ENCODE measurements at regions of chr5 and their contacts with region 1.

Region 1: DNA sequence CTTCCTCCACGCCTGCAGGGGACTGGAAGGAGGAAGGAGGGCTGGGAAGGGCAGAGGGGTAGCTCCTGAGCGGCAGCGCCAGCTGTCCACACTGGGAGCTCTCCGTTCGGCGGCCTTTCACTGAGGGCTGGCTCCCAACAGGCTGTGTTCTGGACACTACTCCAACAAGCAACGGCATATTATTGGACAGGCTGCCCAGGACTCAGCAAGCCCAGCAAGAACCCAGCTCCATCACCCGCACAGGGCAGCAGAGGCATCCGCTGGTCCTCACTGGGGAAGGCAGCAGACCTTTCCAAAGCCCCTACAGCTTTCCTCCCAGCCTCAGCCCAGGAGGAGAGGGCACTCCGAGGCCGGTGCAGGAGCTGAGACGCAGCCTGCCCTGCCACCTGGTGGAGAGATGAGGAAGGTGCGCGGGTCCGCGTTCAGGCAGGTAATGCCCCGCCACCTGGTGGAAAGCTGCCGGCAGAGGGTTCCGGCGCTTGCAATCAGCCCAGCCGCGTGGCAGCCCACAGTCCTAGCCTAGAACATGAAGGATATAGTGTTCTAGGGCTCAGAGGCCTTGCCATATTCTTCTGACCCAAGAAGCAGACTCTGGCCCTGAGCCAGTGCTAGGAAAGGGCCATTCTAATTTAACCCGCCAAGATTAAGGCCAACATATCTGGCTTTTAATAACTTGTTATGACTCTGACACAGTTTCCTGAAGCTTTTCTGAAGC is 74.4 kb downstream of the NRG2 start:
- DNase-seq: peak; percentile 88 to 95
- H3K4me3 ChIP-seq: no peak overlapping the region
- H3K4me3 Mint-ChIP-seq: no peak overlapping the region
- H3K27ac Mint-ChIP-seq: no peak overlapping the region
- H3K4me1 ChIP-seq: no peaks in the 10 kb centered on the region
- H3K4me1 Mint-ChIP-seq: no peaks in the 10 kb centered on the region
- H3K27me3 ChIP-seq: no peaks in the 10 kb centered on the region
- H3K27me3 Mint-ChIP-seq: peaks cover 3% of the 10 kb centered on the region
- CTCF ChIP-seq: peak; percentile 99 to 100

Region 2: DNA sequence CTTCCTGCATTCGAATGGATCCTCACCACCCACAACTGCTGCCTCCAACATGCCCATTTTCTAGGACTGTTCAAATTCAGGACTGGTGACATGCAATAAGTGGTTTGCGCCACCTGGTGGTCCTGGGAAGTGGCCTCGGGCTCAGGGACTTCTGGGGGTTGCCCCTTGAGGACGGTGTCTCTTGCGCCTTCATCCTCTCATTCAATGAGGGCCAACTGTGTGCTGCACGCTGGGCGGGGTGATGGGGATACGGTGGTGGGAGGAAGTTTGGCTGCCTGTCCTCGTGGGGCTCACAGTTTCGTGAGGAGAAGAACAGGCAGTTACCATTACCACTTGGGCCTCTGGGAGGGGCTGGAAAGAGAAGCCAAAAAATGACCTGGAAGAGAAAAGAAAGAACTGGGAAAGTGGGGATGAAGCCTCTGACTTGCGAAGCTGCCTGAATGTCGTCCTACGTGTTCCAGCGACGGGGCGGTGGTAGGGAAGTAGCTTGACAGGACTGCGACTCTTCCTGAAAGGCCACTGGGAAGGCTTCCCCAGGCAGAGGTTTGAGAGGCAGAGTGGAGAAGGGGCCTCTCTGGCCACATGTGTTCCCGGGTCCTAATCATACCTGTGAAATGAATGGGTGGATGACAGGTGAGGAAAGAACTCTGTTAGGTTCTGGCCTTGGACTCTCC is 124.1 kb before region 1 on chr5:
- CTCF ChIA-PET with region 1: interaction called, 10 read pairs
- POLR2A ChIA-PET with region 1: no interaction called
- intact Hi-C with region 1: loop called (anchors 1 kb)
- DNase-seq: peak; percentile 84 to 85
- H3K4me3 ChIP-seq: no peak overlapping the region
- H3K4me3 Mint-ChIP-seq: no peak overlapping the region
- H3K27ac Mint-ChIP-seq: no peak overlapping the region
- H3K4me1 ChIP-seq: no peaks in the 10 kb centered on the region
- H3K4me1 Mint-ChIP-seq: no peaks in the 10 kb centered on the region
- H3K27me3 ChIP-seq: 0 out of 2 replicates have a peak, but pooled peaks cover 1% of the 10 kb centered on the region
- H3K27me3 Mint-ChIP-seq: peaks cover 15% of the 10 kb centered on the region
- CTCF ChIP-seq: peak; percentile 67 to 92

Region 3: DNA sequence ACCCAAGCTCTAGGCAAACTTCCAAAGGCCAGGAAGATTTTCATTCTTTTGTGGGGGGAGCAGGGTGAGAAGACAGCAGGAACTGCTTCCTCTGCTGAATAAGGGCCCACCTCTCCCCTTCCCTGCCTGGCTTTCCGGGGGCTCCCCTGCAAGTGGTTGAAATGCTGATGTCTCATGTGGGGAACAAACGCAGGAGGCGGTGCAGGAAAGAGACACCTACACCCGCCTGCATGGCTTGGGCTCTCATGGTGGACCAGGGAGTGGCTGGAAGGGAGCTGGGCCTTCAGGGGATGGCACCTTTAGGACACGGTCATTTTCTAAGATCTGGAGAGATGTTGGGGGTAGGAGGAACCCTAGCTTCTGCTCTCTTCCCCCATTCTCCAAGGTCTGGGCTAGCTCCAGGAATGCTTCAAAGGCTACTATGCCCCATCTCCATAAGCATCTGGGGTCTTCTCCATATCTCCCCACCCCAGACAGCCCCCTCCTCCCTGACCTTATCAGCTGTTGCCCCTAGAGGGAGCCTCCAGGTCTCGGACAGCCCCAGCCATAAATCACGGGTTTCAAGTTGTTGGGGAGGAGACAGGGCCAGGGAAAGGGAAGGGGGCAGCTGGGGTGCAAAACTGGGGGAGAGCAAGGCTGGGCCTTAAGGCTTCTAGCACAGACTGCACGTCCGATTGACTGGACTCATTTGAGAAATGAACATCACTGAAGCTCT is 96.5 kb before region 1 on chr5:
- CTCF ChIA-PET with region 1: interaction called, 11 read pairs
- POLR2A ChIA-PET with region 1: no interaction called
- intact Hi-C with region 1: loop called (anchors 2 kb)
- DNase-seq: no peak
- H3K4me3 ChIP-seq: no peak overlapping the region
- H3K4me3 Mint-ChIP-seq: no peak overlapping the region
- H3K27ac Mint-ChIP-seq: no peak overlapping the region
- H3K4me1 ChIP-seq: no peaks in the 10 kb centered on the region
- H3K4me1 Mint-ChIP-seq: no peaks in the 10 kb centered on the region
- H3K27me3 ChIP-seq: no peaks in the 10 kb centered on the region
- H3K27me3 Mint-ChIP-seq: peaks cover 6% of the 10 kb centered on the region
- CTCF ChIP-seq: peak; percentile 21 to 44

Region 4: DNA sequence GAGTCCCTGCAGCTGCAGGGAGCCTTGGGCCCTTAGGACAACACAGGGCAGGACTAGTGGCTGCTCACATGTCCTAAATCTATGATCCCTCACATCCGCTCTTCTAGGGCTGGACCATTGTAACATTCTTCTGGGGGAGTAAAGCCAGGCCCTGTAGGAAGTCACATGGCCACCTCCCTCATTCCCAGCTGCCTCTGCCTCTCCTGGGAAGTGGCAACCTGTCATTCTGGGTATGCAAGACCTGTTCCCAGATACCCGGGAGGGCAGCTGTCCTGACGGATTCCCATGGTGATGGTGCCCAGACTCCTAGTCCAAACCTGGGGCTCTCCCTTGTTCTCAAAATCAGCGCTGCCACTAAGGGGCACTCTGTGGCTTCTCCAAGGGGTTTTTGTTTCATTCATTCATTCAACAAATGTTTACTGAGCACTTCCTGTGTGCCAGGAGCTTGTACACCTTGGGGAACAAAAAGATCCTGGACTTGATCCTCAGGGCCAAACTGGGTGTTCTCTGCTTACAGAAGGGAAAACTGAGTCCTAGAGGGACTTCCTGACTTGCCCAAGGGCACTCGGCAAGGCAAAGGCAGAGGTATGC is 87.5 kb before region 1 on chr5:
- CTCF ChIA-PET with region 1: interaction called, 13 read pairs
- POLR2A ChIA-PET with region 1: no interaction called
- intact Hi-C with region 1: no loop called
- DNase-seq: no peak
- H3K4me3 ChIP-seq: no peak overlapping the region
- H3K4me3 Mint-ChIP-seq: no peak overlapping the region
- H3K27ac Mint-ChIP-seq: no peak overlapping the region
- H3K4me1 ChIP-seq: no peaks in the 10 kb centered on the region
- H3K4me1 Mint-ChIP-seq: no peaks in the 10 kb centered on the region
- H3K27me3 ChIP-seq: no peaks in the 10 kb centered on the region
- H3K27me3 Mint-ChIP-seq: peaks cover 10% of the 10 kb centered on the region
- CTCF ChIP-seq: no peak

Region 5: GRCh38 chr5:139949710-139950109 is 19.0 kb before region 1 on chr5:
- CTCF ChIA-PET with region 1: interaction called, 13 read pairs
- POLR2A ChIA-PET with region 1: no interaction called
- intact Hi-C with region 1: no loop called
- DNase-seq: no peak
- H3K4me3 ChIP-seq: no peak overlapping the region
- H3K4me3 Mint-ChIP-seq: no peak overlapping the region
- H3K27ac Mint-ChIP-seq: no peak overlapping the region
- H3K4me1 ChIP-seq: no peaks in the 10 kb centered on the region
- H3K4me1 Mint-ChIP-seq: no peaks in the 10 kb centered on the region
- H3K27me3 ChIP-seq: no peaks in the 10 kb centered on the region; the same call in 1 of the 2 replicates
- H3K27me3 Mint-ChIP-seq: peaks cover 21% of the 10 kb centered on the region
- CTCF ChIP-seq: no peak

Region 6: GRCh38 chr5:139955053-139955605 is 13.6 kb before region 1 on chr5:
- CTCF ChIA-PET with region 1: interaction called, 13 read pairs
- POLR2A ChIA-PET with region 1: no interaction called
- intact Hi-C with region 1: no loop called
- DNase-seq: no peak
- H3K4me3 ChIP-seq: no peak overlapping the region
- H3K4me3 Mint-ChIP-seq: no peak overlapping the region
- H3K27ac Mint-ChIP-seq: no peak overlapping the region
- H3K4me1 ChIP-seq: no peaks in the 10 kb centered on the region
- H3K4me1 Mint-ChIP-seq: no peaks in the 10 kb centered on the region
- H3K27me3 ChIP-seq: no peaks in the 10 kb centered on the region
- H3K27me3 Mint-ChIP-seq: peaks cover 5% of the 10 kb centered on the region
- CTCF ChIP-seq: no peak

Region 7: GRCh38 chr5:139982157-139982974 is 13.7 kb after region 1 on chr5:
- CTCF ChIA-PET with region 1: interaction called, 12 read pairs
- POLR2A ChIA-PET with region 1: no interaction called
- intact Hi-C with region 1: no loop called
- DNase-seq: no peak
- H3K4me3 ChIP-seq: no peak overlapping the region
- H3K4me3 Mint-ChIP-seq: no peak overlapping the region
- H3K27ac Mint-ChIP-seq: no peak overlapping the region
- H3K4me1 ChIP-seq: peaks cover 10% of the 10 kb centered on the region
- H3K4me1 Mint-ChIP-seq: no peaks in the 10 kb centered on the region
- H3K27me3 ChIP-seq: no peaks in the 10 kb centered on the region
- H3K27me3 Mint-ChIP-seq: no peaks in the 10 kb centered on the region
- CTCF ChIP-seq: no peak